Posterior cingulate gyrus (tissue), 11 donors: ENCODE measurements at regions of chr19 and their contacts with region 1.

Region 1: GRCh38 chr19:51393959-51394836 is 3.8 kb upstream of the C19orf84 start:
- DNase-seq: peak; percentile 79 to 98 (median 90)

Region 2: DNA sequence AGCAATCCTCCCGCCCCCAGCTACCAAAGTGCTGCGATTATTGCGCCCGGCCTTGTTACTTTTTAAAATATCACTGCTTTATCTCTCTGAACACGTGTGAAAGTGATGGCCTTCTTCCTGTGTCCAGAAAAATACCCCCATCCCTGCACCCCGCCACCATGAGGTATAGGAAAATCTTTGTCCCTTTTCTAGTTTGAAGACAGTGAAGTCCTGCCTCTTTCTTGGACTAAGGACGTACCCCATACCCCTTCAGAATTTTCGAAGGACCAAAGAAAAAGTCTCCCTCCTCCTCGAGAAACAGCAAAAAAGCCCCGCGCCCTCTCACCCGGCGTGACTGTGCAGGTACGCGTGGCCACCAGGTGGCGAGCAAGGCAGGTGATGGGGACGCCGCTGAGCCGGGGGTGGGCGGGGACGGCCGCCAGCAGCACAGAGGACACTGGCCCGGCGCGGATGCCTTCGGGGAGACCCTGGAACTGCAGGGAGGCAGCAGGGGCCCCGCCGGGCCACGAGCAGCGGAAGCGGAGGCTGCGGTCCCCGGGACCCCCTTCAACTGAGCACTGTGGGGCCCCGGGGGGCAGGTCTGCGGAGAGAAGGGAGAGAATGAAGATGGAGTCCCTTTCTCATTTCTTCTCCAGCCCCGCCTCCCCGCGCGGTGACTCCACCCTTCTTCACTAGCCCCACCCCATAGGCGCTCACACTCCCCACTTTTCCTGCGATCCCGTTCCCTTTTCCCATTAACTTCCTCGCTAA is 55.5 kb before region 1 on chr19:
- intact Hi-C with region 1: loop called (anchors 2 kb)
- DNase-seq: peak; percentile 39 to 95 (median 72)

Region 3: DNA sequence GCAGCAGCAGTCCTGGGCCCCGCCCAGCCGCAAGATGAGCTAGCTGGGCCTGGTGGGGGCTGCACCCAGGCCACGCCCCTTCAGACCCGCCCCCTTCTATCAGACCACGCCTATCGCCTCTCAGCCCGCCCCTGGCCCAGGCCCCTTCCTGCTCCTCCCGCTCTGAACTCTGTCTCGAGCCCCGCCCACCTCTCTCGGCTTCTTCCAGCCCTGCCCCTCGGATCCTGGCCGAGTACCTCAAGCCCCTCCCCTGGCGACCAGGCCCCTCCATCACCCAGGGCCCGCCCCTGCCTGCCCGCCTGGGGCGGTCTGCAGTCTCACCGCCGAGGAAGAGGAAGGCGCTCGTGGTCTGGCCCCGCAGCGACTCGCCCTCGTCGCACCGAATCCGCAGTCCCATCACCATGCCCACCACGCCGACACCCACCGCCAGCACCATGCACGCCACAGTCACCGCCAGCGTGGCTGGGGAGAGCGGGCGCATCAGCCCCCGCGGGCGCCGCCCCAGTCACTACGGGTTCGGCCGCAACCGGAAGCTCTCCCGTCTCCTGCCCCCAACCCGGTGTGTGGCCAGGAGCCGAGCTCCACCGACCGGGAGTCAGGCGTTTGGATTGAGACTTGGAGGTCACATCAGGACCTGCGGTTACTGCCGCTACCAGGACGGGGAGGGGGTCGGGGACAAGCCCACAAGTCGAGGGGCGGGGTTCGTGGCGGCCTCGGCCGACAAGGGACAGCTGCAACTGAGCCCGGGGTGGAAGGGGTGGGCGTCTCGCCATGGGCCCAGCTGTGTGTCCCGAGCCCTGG is 26.4 kb before region 1 on chr19:
- intact Hi-C with region 1: loop called (anchors 1 kb)
- DNase-seq: peak; percentile 96 to 100 (median 98)

Region 4: GRCh38 chr19:51651216-51651846 is 257.1 kb after region 1 on chr19:
- intact Hi-C with region 1: loop called (anchors 10 kb)
- DNase-seq: no peak